ENCODE measurements at regions of chr6 and their contacts with region 1.

Region 1: DNA sequence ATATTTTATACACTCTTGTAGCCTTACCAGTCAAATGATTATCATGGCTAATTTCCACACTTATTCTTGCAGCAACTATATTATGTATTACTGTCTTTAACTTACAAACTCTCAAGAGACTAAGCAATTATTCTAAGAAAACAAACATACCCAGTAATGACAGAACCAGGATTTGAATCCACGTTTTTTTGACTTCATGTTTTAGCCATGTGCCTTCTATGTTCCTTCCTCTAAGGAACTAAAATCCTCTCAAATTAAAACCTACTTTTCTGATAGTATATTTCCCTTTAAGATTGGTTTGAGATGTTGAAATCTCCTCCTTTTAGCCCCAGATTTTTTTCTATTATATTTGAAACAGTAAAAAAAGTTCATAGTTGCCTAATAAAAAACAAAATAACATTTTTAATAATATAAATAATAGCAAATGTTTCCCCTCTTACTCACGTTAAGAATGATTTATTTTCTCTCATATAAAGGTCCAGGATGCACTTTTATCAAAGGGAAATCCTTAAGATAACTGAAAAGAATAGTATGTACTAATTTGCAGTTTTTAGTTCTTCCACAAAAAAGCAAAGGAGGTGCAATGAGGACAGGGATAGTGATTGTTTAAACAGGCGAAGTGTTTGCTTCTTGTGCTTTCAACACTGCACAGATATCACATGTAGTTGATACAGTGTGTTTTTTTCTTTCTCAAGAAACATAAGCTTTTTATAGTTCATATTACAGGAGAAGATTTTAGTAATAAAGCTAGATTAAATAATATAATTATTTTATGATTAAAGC is 54.0 kb downstream of the VTA1 start:
- DNase-seq: no peak
- H3K4me3 Mint-ChIP-seq: no peak overlapping the region
- H3K27ac Mint-ChIP-seq: no peak overlapping the region
- H3K4me1 Mint-ChIP-seq: peaks cover 1% of the 10 kb centered on the region
- H3K27me3 Mint-ChIP-seq: no peaks in the 10 kb centered on the region

Region 2: GRCh38 chr6:142146828-142147662 is 54.0 kb before region 1 on chr6 and contains the starts of genes NMBR and VTA1:
- intact Hi-C with region 1: no loop called
- DNase-seq: peak; percentile 99
- H3K4me3 Mint-ChIP-seq: peak within 1 kb of the TSS; percentile 96
- H3K27ac Mint-ChIP-seq: peak within 1 kb of the TSS; percentile 91
- H3K4me1 Mint-ChIP-seq: peaks cover 40% of the 10 kb centered on the region
- H3K27me3 Mint-ChIP-seq: no peaks in the 10 kb centered on the region
- total RNA-seq, gene NMBR: not detected in 2 replicates
- total RNA-seq, gene VTA1: 52.6 and 54.0 TPM in 2 replicates

Region 3: GRCh38 chr6:142187209-142187608 is 13.8 kb before region 1 on chr6:
- intact Hi-C with region 1: loop called (anchors 2 kb)
- DNase-seq: no peak
- H3K4me3 Mint-ChIP-seq: no peak overlapping the region
- H3K27ac Mint-ChIP-seq: no peak overlapping the region
- H3K4me1 Mint-ChIP-seq: peaks cover 2% of the 10 kb centered on the region
- H3K27me3 Mint-ChIP-seq: no peaks in the 10 kb centered on the region

Region 4: GRCh38 chr6:142222022-142222421 is 21.0 kb after region 1 on chr6:
- intact Hi-C with region 1: no loop called
- DNase-seq: no peak
- H3K4me3 Mint-ChIP-seq: no peak overlapping the region
- H3K27ac Mint-ChIP-seq: no peak overlapping the region
- H3K4me1 Mint-ChIP-seq: no peaks in the 10 kb centered on the region
- H3K27me3 Mint-ChIP-seq: no peaks in the 10 kb centered on the region

Measured in activated CD4-positive, alpha-beta T cell treated with anti-CD3 and anti-CD28 coated beads, Interleukin-2, amount 10 ng/mL, durations not matched to agents 24 days and 14 days (primary cell).